Caco-2 (cell line): ENCODE measurements at regions of chr3 and their contacts with region 1.

Region 1: GRCh38 chr3:64030741-64031140 is 7.4 kb upstream of the PSMD6 start:
- DNase-seq: peak; percentile 83
- H3K4me3 ChIP-seq: no peak overlapping the region
- H3K4me3 Mint-ChIP-seq: peak overlapping the region; percentile 67
- H3K27ac Mint-ChIP-seq: peak overlapping the region; percentile 69
- H3K4me1 ChIP-seq: peaks cover 5% of the 10 kb centered on the region; the same call in 1 of the 2 replicates
- H3K4me1 Mint-ChIP-seq: peaks cover 8% of the 10 kb centered on the region
- H3K27me3 ChIP-seq: no peaks in the 10 kb centered on the region
- H3K27me3 Mint-ChIP-seq: peaks cover 3% of the 10 kb centered on the region
- CTCF ChIP-seq: peak; percentile 79 to 90

Region 2: DNA sequence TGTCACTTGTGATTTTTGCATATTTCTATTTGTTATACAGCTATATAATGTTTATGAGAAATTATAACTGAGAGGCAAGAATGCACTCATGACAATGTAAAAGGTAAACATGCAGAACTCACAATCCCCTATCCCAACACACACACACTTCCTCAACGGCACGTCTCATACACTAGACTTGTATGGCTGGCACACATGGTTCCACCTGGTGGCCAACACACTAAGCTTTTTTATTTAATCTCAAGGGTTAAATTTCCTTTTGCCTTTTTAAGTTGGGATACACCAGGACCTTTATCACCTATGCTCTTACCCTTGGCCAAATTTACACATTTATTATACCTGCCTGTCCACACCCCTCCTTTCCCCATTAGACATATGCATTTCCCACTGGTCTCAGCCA is 81.1 kb after region 1 on chr3:
- CTCF ChIA-PET with region 1: no interaction called
- POLR2A ChIA-PET with region 1: no interaction called
- intact Hi-C with region 1: loop called (anchors 1 kb)
- DNase-seq: no peak
- H3K4me3 ChIP-seq: no peak overlapping the region
- H3K4me3 Mint-ChIP-seq: no peak overlapping the region
- H3K27ac Mint-ChIP-seq: no peak overlapping the region
- H3K4me1 ChIP-seq: peaks cover 16% of the 10 kb centered on the region
- H3K4me1 Mint-ChIP-seq: peaks cover 13% of the 10 kb centered on the region
- H3K27me3 ChIP-seq: no peaks in the 10 kb centered on the region
- H3K27me3 Mint-ChIP-seq: no peaks in the 10 kb centered on the region
- CTCF ChIP-seq: no peak

Region 3: DNA sequence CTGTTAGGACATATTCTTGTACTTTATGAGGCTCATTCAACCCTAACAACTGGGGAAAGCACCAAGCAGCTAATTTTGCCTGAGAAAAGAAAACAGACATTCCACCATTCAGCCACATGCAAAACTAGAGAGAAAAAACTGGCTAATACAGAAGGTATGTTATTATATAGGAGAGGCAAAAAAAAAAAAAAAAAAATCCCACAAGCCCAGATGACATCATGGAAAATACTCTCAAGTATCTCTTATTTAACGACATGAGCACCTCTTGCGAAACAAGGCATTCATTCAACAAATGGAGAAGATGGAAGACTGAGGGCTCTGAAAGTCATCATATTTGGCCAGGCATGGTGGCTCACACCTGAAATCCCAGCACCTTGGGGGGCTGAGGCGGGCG is 133.0 kb after region 1 on chr3:
- CTCF ChIA-PET with region 1: no interaction called
- POLR2A ChIA-PET with region 1: no interaction called
- intact Hi-C with region 1: loop called (anchors 1 kb)
- DNase-seq: peak in 1 of 2 experiments; percentile 22
- H3K4me3 ChIP-seq: no peak overlapping the region
- H3K4me3 Mint-ChIP-seq: peak overlapping the region; percentile 16
- H3K27ac Mint-ChIP-seq: peak overlapping the region; percentile 69
- H3K4me1 ChIP-seq: peaks cover 59% of the 10 kb centered on the region
- H3K4me1 Mint-ChIP-seq: peaks cover 21% of the 10 kb centered on the region
- H3K27me3 ChIP-seq: no peaks in the 10 kb centered on the region
- H3K27me3 Mint-ChIP-seq: no peaks in the 10 kb centered on the region
- CTCF ChIP-seq: no peak

Region 4: DNA sequence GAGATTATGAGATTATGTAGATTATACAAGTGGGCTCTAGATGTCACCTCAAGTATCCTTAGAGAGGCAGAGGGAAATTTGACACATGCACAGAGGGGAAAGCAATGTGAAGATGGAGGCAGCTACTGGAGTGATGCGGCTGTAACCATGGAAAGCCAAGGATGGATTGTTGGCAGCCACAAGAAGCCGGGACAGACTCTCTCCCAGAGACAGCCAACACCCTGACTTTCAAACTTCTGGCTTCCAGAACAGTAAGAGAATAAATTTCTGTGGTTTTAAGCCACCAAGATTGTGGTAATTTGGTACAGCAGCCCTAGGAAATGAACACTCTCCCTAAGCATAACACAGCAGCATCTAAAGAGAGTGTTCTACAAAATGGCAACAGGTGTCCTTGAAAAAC is 228.9 kb after region 1 on chr3:
- CTCF ChIA-PET with region 1: no interaction called
- POLR2A ChIA-PET with region 1: no interaction called
- intact Hi-C with region 1: loop called (anchors 10 kb)
- DNase-seq: no peak
- H3K4me3 ChIP-seq: no peak overlapping the region
- H3K4me3 Mint-ChIP-seq: no peak overlapping the region
- H3K27ac Mint-ChIP-seq: no peak overlapping the region
- H3K4me1 ChIP-seq: peaks cover 24% of the 10 kb centered on the region
- H3K4me1 Mint-ChIP-seq: peaks cover 10% of the 10 kb centered on the region
- H3K27me3 ChIP-seq: no peaks in the 10 kb centered on the region
- H3K27me3 Mint-ChIP-seq: no peaks in the 10 kb centered on the region
- CTCF ChIP-seq: no peak

Region 5: GRCh38 chr3:64399205-64399800 is 368.6 kb after region 1 on chr3:
- CTCF ChIA-PET with region 1: no interaction called
- POLR2A ChIA-PET with region 1: no interaction called
- intact Hi-C with region 1: loop called (anchors 1 kb)
- DNase-seq: peak in 1 of 2 experiments; percentile 67
- H3K4me3 ChIP-seq: no peak overlapping the region
- H3K4me3 Mint-ChIP-seq: no peak overlapping the region
- H3K27ac Mint-ChIP-seq: no peak overlapping the region
- H3K4me1 ChIP-seq: no peaks in the 10 kb centered on the region
- H3K4me1 Mint-ChIP-seq: no peaks in the 10 kb centered on the region
- H3K27me3 ChIP-seq: no peaks in the 10 kb centered on the region
- H3K27me3 Mint-ChIP-seq: no peaks in the 10 kb centered on the region
- CTCF ChIP-seq: peak; percentile 48 to 71

Region 6: GRCh38 chr3:64484289-64484992 is 453.7 kb after region 1 on chr3:
- CTCF ChIA-PET with region 1: no interaction called
- POLR2A ChIA-PET with region 1: no interaction called
- intact Hi-C with region 1: loop called (anchors 1 kb)
- DNase-seq: peak; percentile 79 to 85
- H3K4me3 ChIP-seq: no peak overlapping the region
- H3K4me3 Mint-ChIP-seq: no peak overlapping the region
- H3K27ac Mint-ChIP-seq: no peak overlapping the region
- H3K4me1 ChIP-seq: peaks cover 6% of the 10 kb centered on the region; the same call in 1 of the 2 replicates
- H3K4me1 Mint-ChIP-seq: peaks cover 6% of the 10 kb centered on the region
- H3K27me3 ChIP-seq: no peaks in the 10 kb centered on the region
- H3K27me3 Mint-ChIP-seq: no peaks in the 10 kb centered on the region
- CTCF ChIP-seq: peak; percentile 83 to 88